ENCODE measurements at regions of chr1 and their contacts with region 1.

Region 1: DNA sequence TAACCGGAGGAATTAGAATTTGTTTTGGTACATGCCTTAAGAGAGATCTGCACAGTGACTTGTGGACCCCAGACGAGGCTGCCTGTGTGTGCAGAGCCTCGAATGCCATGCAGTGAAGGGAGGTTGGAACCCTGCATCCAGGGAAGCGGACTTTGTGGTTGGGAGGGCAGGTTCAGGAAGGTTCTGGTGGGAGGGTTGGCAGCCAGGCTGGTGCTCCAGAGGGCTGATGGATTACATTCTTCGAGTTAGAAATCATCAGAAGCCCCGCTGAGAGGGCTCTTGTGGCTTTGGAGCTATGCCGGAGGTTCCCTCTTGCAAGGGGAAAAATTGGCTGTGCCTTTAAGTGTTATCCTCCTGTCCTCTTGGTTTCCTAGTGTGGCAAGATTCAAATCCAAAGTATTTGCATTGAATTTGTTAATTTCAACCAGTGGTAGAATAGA is 21.1 kb downstream of the ROR1 start:
- DNase-seq: no peak
- ATAC-seq: peak in 4 of 8 donors; percentile 3 to 23 (median 12)
- H3K4me3 ChIP-seq: no peak overlapping the region
- H3K27ac ChIP-seq: peak overlapping the region in 4 of 10 donors; percentile 21 to 59 (median 44)
- H3K4me1 ChIP-seq: peaks cover 8 to 96% (median 37%) of the 10 kb centered on the region in 9 donors
- H3K27me3 ChIP-seq: no peaks in the 10 kb centered on the region
- CTCF ChIP-seq: no peak

Region 2: DNA sequence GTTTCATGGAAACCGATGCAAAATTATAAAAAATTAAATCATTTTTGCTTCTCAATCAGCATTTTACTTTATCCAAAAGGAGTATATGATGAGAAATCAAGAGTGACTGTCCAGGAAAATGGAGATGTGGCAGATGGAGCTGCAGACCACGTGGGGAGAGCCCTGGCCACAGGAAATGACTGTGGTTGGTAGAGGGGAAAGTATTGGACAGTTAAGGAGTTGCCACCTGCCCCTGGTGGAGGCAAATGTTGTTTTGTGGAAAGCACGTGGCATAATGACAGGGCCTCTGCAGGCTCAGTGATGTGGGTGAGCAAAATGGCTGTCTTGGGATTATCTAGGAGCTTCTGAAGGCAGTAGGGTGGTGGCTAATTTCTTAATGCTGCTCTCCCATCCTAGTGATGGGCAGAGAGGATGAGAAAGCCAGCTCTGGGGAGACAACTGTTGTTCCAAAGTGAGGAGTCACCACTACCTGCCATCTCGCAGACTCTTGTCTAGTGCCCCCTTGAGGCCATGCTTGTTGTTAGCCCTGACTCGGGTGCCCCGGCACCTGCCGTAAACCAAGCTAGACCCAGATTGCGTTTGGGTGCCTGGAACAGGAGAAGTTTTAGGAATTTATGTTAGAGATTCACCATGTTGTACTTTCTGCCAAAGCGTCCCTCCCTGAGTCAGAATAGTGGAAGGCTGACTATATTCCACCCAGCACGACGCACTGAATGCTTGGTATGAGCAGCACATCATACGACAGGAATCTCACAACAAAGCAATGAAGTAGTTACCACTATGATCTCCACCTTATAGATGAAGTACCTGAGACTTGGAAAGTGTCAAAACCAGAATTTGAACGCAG is 122.8 kb after region 1 on chr1:
- intact Hi-C with region 1: loop called in 1 of 10 experiments (anchors 10 kb)
- DNase-seq: no peak
- ATAC-seq: no peak
- H3K4me3 ChIP-seq: no peak overlapping the region
- H3K27ac ChIP-seq: no peak overlapping the region
- H3K4me1 ChIP-seq: peaks cover 8 to 75% (median 42%) of the 10 kb centered on the region in 9 donors
- H3K27me3 ChIP-seq: no peaks in the 10 kb centered on the region
- CTCF ChIP-seq: peak in 2 of 9 donors; percentile 17 to 22